ENCODE measurements at regions of chr2 and their contacts with region 1.

Region 1: GRCh38 chr2:233990261-233990798 is 60.2 kb upstream of the SPP2 start:
- DNase-seq: peak; percentile 88
- H3K4me3 Mint-ChIP-seq: no peak overlapping the region
- H3K27ac Mint-ChIP-seq: no peak overlapping the region
- H3K4me1 Mint-ChIP-seq: peaks cover 38% of the 10 kb centered on the region
- H3K27me3 Mint-ChIP-seq: no peaks in the 10 kb centered on the region

Region 2: GRCh38 chr2:232981381-232982360 is 1008.7 kb before region 1 on chr2:
- CTCF ChIA-PET with region 1: no interaction called
- intact Hi-C with region 1: no loop called
- DNase-seq: no peak
- H3K4me3 Mint-ChIP-seq: no peak overlapping the region
- H3K27ac Mint-ChIP-seq: no peak overlapping the region
- H3K4me1 Mint-ChIP-seq: no peaks in the 10 kb centered on the region
- H3K27me3 Mint-ChIP-seq: no peaks in the 10 kb centered on the region

Region 3: DNA sequence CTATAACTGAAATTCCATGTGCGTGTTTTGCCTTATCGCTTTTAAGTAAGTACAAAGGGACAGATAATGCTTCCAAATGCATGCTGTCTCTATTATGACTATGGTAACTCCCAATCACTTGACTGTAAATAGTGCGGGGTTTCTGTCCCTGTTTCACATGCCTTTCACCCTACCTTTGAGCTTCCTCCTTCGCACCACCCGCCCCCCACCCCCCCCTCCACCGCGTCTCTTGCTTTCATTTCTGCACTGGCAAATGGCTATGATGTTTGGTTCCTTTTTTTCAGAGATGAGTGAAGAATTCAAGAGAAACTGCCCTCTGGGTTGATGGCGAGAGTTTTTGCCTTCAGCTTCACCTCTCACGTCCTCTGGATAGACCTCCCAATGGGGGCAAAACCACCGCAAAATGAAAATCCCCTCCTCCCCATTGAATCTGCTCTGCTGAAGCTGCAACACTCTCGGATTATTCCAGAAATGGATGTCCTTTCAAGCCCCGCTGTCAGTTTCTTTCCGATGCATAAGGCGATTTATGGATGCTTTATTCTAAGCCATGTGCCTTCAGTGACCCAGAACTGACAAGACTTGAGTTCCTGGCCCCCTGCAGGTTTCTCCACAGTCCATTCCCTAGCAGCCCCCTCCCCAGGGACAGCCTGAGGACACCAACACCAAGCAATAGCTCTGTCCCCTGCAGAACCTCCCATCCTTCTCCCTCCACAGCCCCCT is 35.3 kb after region 1 on chr2:
- CTCF ChIA-PET with region 1: no interaction called
- intact Hi-C with region 1: loop called (anchors 1 kb)
- DNase-seq: peak; percentile 38
- H3K4me3 Mint-ChIP-seq: peak overlapping the region; percentile 57
- H3K27ac Mint-ChIP-seq: no peak overlapping the region
- H3K4me1 Mint-ChIP-seq: peaks cover 30% of the 10 kb centered on the region
- H3K27me3 Mint-ChIP-seq: no peaks in the 10 kb centered on the region

Region 4: GRCh38 chr2:234032279-234032856 is 42.0 kb after region 1 on chr2:
- CTCF ChIA-PET with region 1: no interaction called
- intact Hi-C with region 1: loop called (anchors 1 kb)
- DNase-seq: peak; percentile 41
- H3K4me3 Mint-ChIP-seq: no peak overlapping the region
- H3K27ac Mint-ChIP-seq: no peak overlapping the region
- H3K4me1 Mint-ChIP-seq: peaks cover 14% of the 10 kb centered on the region
- H3K27me3 Mint-ChIP-seq: peaks cover 2% of the 10 kb centered on the region

Region 5: DNA sequence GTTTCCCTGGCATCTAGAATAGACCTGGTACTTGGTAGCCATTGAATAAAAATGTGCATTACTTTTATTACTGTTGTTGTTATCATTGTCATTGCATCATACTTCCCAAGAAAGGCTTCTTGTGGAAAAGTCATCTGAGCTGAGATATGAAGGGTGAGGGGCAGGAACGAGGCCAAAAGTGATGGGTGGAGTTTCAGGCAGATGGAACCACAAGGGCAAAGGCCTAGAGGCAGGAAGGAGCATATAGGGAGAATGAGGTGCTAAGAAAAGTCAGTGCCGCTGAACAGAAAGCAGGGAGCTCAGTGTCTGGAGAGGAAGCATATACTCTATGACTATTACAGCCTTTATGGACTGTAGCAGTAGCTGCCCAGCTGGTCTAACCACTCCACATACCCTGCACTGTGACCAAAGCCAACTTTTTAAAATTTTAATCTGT is 279.5 kb after region 1 on chr2:
- CTCF ChIA-PET with region 1: no interaction called
- intact Hi-C with region 1: loop called (anchors 5 kb)
- DNase-seq: no peak
- H3K4me3 Mint-ChIP-seq: no peak overlapping the region
- H3K27ac Mint-ChIP-seq: no peak overlapping the region
- H3K4me1 Mint-ChIP-seq: peaks cover 47% of the 10 kb centered on the region
- H3K27me3 Mint-ChIP-seq: no peaks in the 10 kb centered on the region

Region 6: GRCh38 chr2:234500394-234501006 is 510.2 kb after region 1 on chr2:
- CTCF ChIA-PET with region 1: no interaction called
- intact Hi-C with region 1: loop called (anchors 5 kb)
- DNase-seq: peak; percentile 83
- H3K4me3 Mint-ChIP-seq: no peak overlapping the region
- H3K27ac Mint-ChIP-seq: no peak overlapping the region
- H3K4me1 Mint-ChIP-seq: peaks cover 26% of the 10 kb centered on the region
- H3K27me3 Mint-ChIP-seq: no peaks in the 10 kb centered on the region

Measured in activated naive CD4-positive, alpha-beta T cell treated with anti-CD3 and anti-CD28 coated beads for 36 hours (primary cell).